AG04449 (cell line): ENCODE measurements at regions of chr1 and their contacts with region 1.

Region 1: GRCh38 chr1:53393325-53393792 is 65.5 kb upstream of the LRP8 start:
- DNase-seq: no peak
- H3K4me3 ChIP-seq: no peak overlapping the region
- CTCF ChIP-seq: peak; percentile 85

Region 2: GRCh38 chr1:53266106-53266505 is 127.3 kb before region 1 on chr1:
- CTCF ChIA-PET with region 1: interaction called, 574 read pairs
- POLR2A ChIA-PET with region 1: no interaction called
- DNase-seq: no peak
- H3K4me3 ChIP-seq: no peak overlapping the region
- CTCF ChIP-seq: peak; percentile 12

Region 3: DNA sequence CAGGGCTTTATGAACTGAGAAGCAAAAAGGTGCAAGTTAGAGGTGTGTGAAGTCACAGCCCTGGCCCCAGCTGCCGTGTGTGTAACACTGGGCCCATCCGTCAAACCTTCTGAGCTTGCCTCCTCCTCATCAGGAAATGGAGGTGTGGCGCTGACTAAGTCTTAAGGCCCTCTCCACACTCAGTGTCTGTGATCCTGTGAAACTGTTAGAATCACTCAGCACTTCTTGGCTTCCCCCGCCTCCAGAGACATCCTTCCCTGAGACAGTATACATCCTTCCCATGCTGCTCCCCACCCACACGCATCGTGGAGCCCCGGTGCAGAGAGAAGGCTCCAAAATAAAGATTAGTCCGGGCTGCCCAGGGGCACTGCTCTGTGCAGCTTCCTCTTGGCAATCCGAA is 98.8 kb before region 1 on chr1:
- CTCF ChIA-PET with region 1: interaction called, 36 read pairs
- POLR2A ChIA-PET with region 1: no interaction called
- DNase-seq: peak; percentile 23
- H3K4me3 ChIP-seq: no peak overlapping the region
- CTCF ChIP-seq: no peak

Region 4: DNA sequence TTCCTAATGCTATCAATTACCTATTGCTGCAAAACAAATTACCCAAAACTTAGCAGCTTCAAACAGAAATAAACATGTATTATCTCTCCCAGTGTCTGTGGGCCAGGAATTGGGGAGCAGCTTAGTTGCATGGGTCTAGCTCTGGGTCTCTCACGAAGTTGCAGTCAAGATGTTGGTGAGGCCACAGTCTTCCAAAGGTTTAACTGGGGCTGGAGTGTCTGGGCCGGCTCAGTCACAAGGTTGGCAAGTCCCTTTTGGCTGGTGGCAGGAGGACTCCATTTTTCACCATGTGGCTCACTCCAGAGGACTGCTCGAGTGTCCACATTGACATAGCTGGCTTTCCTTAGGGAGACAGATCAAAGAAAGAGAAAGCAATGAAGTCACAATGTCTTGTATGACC is 60.5 kb before region 1 on chr1:
- CTCF ChIA-PET with region 1: no interaction called
- POLR2A ChIA-PET with region 1: no interaction called
- DNase-seq: no peak
- H3K4me3 ChIP-seq: no peak overlapping the region
- CTCF ChIP-seq: no peak

Region 5: GRCh38 chr1:53343831-53344668 is 49.3 kb before region 1 on chr1:
- CTCF ChIA-PET with region 1: interaction called, 10 read pairs
- POLR2A ChIA-PET with region 1: no interaction called
- DNase-seq: no peak
- H3K4me3 ChIP-seq: no peak overlapping the region
- CTCF ChIP-seq: no peak

Region 6: GRCh38 chr1:53381790-53382401 is 11.5 kb before region 1 on chr1:
- CTCF ChIA-PET with region 1: interaction called, 59 read pairs
- POLR2A ChIA-PET with region 1: no interaction called
- DNase-seq: no peak
- H3K4me3 ChIP-seq: no peak overlapping the region
- CTCF ChIP-seq: no peak

Region 7: GRCh38 chr1:53413175-53414001 is 20.0 kb after region 1 on chr1:
- CTCF ChIA-PET with region 1: interaction called, 87 read pairs
- POLR2A ChIA-PET with region 1: no interaction called
- DNase-seq: peak; percentile 74
- H3K4me3 ChIP-seq: no peak overlapping the region
- CTCF ChIP-seq: no peak